PC-3 (cell line): ENCODE measurements at regions of chr18 and their contacts with region 1.

Region 1: DNA sequence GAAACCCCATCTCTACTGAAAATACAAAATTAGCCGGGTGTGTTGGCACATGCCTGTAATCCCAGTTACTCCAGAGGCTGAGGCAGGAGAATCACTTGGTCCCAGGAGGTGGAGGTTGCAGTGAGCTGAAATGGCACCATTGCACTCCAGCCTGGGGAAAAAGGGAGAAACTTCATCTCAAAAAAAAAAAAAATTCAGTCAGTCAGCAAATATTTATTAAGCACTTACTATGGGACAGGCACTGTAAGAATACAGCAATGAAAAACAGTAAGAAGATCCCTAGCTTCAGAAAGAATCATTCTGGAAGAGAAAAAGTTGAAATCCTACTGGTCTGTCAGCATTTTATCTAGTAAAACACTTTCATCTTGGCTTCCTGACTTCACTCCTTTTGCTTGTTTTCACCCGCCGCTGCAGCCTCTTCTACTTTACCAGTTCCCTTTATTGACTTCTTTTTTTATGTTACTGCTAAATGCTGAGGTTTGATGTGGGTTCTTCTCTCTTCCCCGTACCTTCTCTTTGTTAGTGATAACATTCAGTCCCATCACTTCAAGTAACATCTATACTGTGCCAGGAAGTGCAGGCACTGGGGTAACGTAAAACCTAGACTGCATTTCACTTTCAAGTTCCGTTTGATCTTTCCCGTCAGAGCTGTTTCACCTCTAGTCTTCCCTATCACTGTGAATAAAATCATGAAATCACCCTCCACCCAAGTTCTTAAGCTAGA is 10.8 kb upstream of the TAF4B start:
- DNase-seq: no peak
- ATAC-seq: no peak
- H3K4me3 ChIP-seq: no peak overlapping the region
- H3K27ac ChIP-seq: no peak overlapping the region
- H3K4me1 ChIP-seq: no peaks in the 10 kb centered on the region
- H3K27me3 ChIP-seq: no peaks in the 10 kb centered on the region
- CTCF ChIP-seq: no peak

Region 2: DNA sequence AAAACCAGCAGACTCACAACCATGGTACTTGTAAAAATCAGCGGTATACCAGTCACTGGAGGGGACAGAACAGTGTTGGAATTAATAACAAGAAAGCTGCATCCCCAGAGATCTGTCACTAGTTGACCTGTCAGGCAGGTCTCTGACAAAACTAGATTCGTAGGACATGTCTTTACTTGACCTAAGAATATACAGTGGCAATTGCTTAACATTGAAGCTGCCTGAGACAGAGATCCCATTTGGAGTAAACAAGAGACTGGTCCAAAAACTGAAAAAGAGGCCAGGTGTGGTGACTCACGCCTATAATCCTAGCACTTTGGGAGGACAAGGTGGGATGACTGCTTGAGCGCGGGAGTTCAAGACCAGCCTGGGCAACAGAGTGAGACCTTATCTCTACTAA is 117.8 kb before region 1 on chr18:
- CTCF ChIA-PET with region 1: interaction called, 12 read pairs
- POLR2A ChIA-PET with region 1: no interaction called
- intact Hi-C with region 1: no loop called
- DNase-seq: no peak
- ATAC-seq: no peak
- H3K4me3 ChIP-seq: no peak overlapping the region
- H3K27ac ChIP-seq: no peak overlapping the region
- H3K4me1 ChIP-seq: no peaks in the 10 kb centered on the region
- H3K27me3 ChIP-seq: peaks cover 7% of the 10 kb centered on the region; the same call in 1 of the 2 replicates
- CTCF ChIP-seq: no peak